ENCODE measurements at regions of chr1 and their contacts with region 1.

Region 1: GRCh38 chr1:9910425-9911178 is 533 bp upstream of the CTNNBIP1 start:
- DNase-seq: peak; percentile 100
- ATAC-seq: peak; percentile 96
- H3K4me3 Mint-ChIP-seq: peak overlapping the region; percentile 82
- H3K27ac Mint-ChIP-seq: peak overlapping the region; percentile 92
- H3K4me1 Mint-ChIP-seq: peaks cover 23% of the 10 kb centered on the region
- H3K27me3 Mint-ChIP-seq: no peaks in the 10 kb centered on the region

Region 2: GRCh38 chr1:9128520-9129265 is 781.9 kb before region 1 on chr1 and contains the start of gene GPR157:
- CTCF ChIA-PET with region 1: no interaction called
- POLR2A ChIA-PET with region 1: no interaction called
- intact Hi-C with region 1: loop called in 1 of 2 experiments (anchors 1 kb)
- DNase-seq: peak; percentile 93
- ATAC-seq: peak; percentile 84
- H3K4me3 Mint-ChIP-seq: peak within 1 kb of the TSS; percentile 83
- H3K27ac Mint-ChIP-seq: peak within 1 kb of the TSS; percentile 67
- H3K4me1 Mint-ChIP-seq: peaks cover 37% of the 10 kb centered on the region
- H3K27me3 Mint-ChIP-seq: no peaks in the 10 kb centered on the region
- total RNA-seq, gene GPR157: 2.7 to 3.6 TPM

Region 3: DNA sequence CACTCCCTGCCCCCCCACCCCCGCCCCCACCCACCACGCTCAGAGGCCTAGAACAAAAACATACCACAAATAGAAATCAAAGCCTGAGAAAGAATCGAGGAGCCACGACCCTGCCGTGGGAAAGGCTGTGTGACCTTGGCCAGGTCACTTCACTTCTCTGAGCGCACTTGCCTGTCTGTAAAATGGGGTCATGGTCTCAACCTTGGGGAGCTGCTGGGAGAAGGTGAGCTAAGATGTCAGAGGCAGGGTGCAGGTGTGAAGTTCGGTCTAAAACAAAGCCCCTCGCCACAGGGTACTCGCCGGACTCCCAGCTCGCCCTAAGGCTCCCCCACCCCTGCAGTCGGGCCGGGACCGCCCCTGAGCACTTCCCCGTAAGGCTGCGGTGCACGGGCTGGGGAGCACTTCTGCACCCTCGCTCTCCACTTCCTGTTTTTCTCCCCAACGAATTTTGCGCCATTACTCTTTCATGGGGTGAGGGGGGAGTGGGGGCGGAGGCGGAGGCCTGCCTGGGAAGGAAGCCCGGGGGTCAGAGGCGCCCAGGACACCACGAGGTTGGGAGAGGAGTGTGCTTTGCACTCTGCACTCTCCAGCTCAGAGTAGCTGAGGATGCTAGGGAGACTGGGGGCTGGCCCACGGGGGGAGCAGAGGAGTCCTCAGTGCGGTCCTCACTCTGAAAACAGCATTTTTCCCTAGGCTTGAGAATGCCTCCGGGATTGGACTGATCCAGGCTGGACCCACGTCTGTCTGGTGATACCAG is 281.0 kb before region 1 on chr1:
- CTCF ChIA-PET with region 1: interaction called, 3 read pairs
- POLR2A ChIA-PET with region 1: interaction called, 7 read pairs
- intact Hi-C with region 1: loop called in 1 of 2 experiments (anchors 1 kb)
- DNase-seq: peak; percentile 88
- ATAC-seq: peak; percentile 45
- H3K4me3 Mint-ChIP-seq: peak overlapping the region; percentile 87
- H3K27ac Mint-ChIP-seq: peak overlapping the region; percentile 95
- H3K4me1 Mint-ChIP-seq: peaks cover 64% of the 10 kb centered on the region
- H3K27me3 Mint-ChIP-seq: peaks cover 2% of the 10 kb centered on the region

Region 4: DNA sequence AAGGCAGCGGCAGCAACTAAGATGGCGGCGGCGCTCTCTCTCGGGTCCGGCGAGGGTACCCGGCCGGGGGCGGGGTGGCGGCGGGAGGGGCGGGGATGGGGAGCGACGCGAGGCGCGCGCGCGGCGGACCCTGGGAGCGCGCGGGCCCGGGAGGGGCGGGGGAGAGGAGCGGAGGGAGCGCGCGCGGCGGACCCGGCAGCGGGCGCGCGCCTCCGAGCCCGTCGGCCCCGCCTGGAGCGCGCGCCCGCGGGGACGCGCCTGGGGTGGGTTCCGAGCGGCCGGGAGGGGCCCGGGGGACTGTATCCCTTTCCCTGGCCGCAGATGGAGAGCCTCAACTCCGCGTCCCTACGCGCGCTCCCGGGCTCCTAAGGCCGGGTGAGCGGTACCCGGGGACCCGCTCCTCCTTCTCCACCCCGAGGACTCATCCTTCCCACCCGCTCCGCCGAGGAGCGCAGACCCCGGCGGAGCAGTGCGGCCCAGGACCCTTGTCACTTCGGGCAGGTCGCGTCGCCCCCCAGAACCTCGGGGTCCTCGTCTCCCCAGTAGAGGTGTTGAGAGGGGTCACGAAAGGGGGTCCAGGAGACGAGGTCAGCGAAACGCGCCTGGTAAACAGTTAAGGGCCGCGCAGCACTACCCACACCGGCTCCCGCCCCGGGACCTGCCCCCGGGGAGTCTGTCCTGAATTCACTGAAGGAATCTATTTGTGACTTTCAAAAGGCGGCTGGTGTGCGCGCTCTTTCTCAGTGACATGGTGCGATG is 86.5 kb before region 1 on chr1 and contains the start of gene CLSTN1:
- CTCF ChIA-PET with region 1: no interaction called
- POLR2A ChIA-PET with region 1: no interaction called
- intact Hi-C with region 1: loop called in 1 of 2 experiments (anchors 1 kb)
- DNase-seq: peak; percentile 96
- ATAC-seq: peak; percentile 72
- H3K4me3 Mint-ChIP-seq: peak within 1 kb of the TSS; percentile 96
- H3K27ac Mint-ChIP-seq: peak within 1 kb of the TSS; percentile 89
- H3K4me1 Mint-ChIP-seq: peaks cover 35% of the 10 kb centered on the region
- H3K27me3 Mint-ChIP-seq: peaks cover 9% of the 10 kb centered on the region
- total RNA-seq, gene CLSTN1: 34.9 to 36.7 TPM

Region 5: GRCh38 chr1:9922342-9922741 is 11.7 kb after region 1 on chr1:
- CTCF ChIA-PET with region 1: no interaction called
- POLR2A ChIA-PET with region 1: no interaction called
- intact Hi-C with region 1: no loop called
- DNase-seq: no peak
- ATAC-seq: no peak
- H3K4me3 Mint-ChIP-seq: no peak overlapping the region
- H3K27ac Mint-ChIP-seq: no peak overlapping the region
- H3K4me1 Mint-ChIP-seq: peaks cover 9% of the 10 kb centered on the region
- H3K27me3 Mint-ChIP-seq: no peaks in the 10 kb centered on the region

Region 6: DNA sequence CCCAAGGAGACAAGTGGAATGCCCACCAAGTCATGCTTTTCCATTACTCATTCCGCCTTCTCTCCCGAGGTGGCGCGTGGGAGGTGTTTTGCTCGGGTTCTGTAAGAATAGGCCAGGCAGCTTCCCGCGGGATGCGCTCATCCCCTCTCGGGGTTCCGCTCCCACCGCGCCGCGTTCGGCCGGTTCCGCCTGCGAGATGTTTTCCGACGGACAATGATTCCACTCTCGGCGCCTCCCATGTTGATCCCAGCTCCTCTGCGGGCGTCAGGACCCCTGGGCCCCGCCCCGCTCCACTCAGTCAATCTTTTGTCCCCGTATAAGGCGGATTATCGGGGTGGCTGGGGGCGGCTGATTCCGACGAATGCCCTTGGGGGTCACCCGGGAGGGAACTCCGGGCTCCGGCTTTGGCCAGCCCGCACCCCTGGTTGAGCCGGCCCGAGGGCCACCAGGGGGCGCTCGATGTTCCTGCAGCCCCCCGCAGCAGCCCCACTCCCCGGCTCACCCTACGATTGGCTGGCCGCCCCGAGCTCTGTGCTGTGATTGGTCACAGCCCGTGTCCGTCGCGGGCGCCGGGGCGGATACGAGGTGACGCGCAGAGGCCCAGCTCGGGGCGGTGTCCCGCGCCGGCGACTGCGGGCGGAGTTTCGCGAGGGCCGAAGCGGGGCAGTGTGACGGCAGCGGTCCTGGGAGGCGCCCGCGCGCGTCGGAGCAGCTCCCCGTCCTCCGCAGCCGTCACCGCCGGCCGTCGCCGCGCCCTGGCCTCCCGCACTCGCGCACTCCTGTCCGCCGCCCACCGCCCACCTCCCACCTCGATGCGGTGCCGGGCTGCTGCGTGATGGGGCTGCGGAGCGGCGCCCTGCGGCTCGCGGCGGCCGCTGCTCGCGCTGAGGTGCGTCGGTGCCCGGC is 299.6 kb after region 1 on chr1 and contains the start of gene KIF1B:
- CTCF ChIA-PET with region 1: no interaction called
- POLR2A ChIA-PET with region 1: no interaction called
- intact Hi-C with region 1: loop called in 1 of 2 experiments (anchors 2 kb)
- DNase-seq: peak; percentile 97
- ATAC-seq: peak; percentile 98
- H3K4me3 Mint-ChIP-seq: peak within 1 kb of the TSS; percentile 76
- H3K27ac Mint-ChIP-seq: peak within 1 kb of the TSS; percentile 74
- H3K4me1 Mint-ChIP-seq: peaks cover 31% of the 10 kb centered on the region
- H3K27me3 Mint-ChIP-seq: no peaks in the 10 kb centered on the region
- total RNA-seq, gene KIF1B: 12.3 to 13.5 TPM

Region 7: GRCh38 chr1:10494754-10495474 is 584.3 kb after region 1 on chr1:
- CTCF ChIA-PET with region 1: no interaction called
- POLR2A ChIA-PET with region 1: no interaction called
- intact Hi-C with region 1: loop called in 1 of 2 experiments (anchors 1 kb)
- DNase-seq: peak; percentile 90
- ATAC-seq: peak; percentile 87
- H3K4me3 Mint-ChIP-seq: peak overlapping the region; percentile 72
- H3K27ac Mint-ChIP-seq: peak overlapping the region; percentile 91
- H3K4me1 Mint-ChIP-seq: peaks cover 49% of the 10 kb centered on the region
- H3K27me3 Mint-ChIP-seq: no peaks in the 10 kb centered on the region

Region 8: DNA sequence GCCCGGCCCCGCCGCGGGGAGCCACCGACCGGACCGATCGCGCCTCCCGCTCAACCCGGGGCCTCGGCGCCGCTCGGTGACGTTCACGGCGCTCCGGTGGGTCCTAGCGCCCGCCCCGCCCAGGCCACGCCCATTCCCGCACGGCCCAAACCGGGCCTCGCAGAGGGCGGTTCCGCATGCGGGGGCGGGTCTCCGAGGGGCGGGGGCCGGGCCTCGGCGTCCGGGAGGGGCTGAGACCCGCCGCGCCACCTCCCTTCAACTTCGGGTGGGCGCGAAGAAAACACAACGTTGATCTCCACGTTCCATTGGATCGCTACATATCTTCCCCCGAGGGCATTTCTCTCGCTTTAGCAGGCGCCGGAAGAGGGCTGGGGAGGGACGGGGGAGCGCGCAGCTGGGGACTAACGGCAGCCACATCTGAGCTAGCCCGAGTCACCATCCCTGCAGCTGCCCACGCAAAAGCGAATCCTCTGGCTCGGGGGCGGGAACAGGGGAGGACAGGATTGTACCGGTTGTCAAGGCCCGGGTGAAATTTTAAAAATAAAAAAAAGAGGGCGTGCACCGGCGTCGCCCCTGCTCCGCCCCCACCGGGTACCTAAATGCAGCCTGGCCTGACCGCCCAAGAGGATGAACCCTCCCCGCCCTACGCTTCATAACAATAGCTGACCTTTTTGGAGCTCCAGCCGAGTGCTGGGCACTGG is 1770.6 kb after region 1 on chr1 and contains the start of gene MAD2L2:
- CTCF ChIA-PET with region 1: no interaction called
- POLR2A ChIA-PET with region 1: no interaction called
- intact Hi-C with region 1: loop called in 1 of 2 experiments (anchors 5 kb)
- DNase-seq: peak; percentile 96
- ATAC-seq: peak; percentile 85
- H3K4me3 Mint-ChIP-seq: peak within 1 kb of the TSS; percentile 83
- H3K27ac Mint-ChIP-seq: peak within 1 kb of the TSS; percentile 88
- H3K4me1 Mint-ChIP-seq: peaks cover 9% of the 10 kb centered on the region
- H3K27me3 Mint-ChIP-seq: no peaks in the 10 kb centered on the region
- total RNA-seq, gene MAD2L2: 70.4 to 71.5 TPM